Gastrocnemius medialis (tissue), 4 donors: ENCODE measurements at regions of chr5 and their contacts with region 1.

Region 1: GRCh38 chr5:172646716-172647285 is 5.7 kb downstream of the NEURL1B start:
- DNase-seq: no peak
- ATAC-seq: no peak
- H3K4me3 ChIP-seq: peak overlapping the region in 2 of 4 donors; percentile 13 to 19
- H3K27ac ChIP-seq: peak overlapping the region; percentile 48 to 87 (median 76)
- H3K4me1 ChIP-seq: peaks cover 13 to 17% of the 10 kb centered on the region in 2 donors
- H3K27me3 ChIP-seq: peaks cover 0 to under 1% (median 0%) of the 10 kb centered on the region in 3 donors
- CTCF ChIP-seq: no peak
- POLR2A ChIP-seq: no peak

Region 2: GRCh38 chr5:172690258-172691075 is 43.7 kb after region 1 on chr5:
- in situ Hi-C with region 1: loop called in 1 of 4 experiments (anchors 5 kb)
- intact Hi-C with region 1: no loop called
- DNase-seq: no peak
- ATAC-seq: no peak
- H3K4me3 ChIP-seq: no peak overlapping the region
- H3K27ac ChIP-seq: peak overlapping the region; percentile 59 to 77 (median 73)
- H3K4me1 ChIP-seq: peaks cover 0 to 16% of the 10 kb centered on the region in 2 donors
- H3K27me3 ChIP-seq: no peaks in the 10 kb centered on the region
- CTCF ChIP-seq: no peak
- POLR2A ChIP-seq: no peak

Region 3: GRCh38 chr5:172721301-172722130 is 74.7 kb after region 1 on chr5:
- in situ Hi-C with region 1: no loop called
- intact Hi-C with region 1: no loop called
- DNase-seq: no peak
- ATAC-seq: peak; percentile 33 to 56
- H3K4me3 ChIP-seq: no peak overlapping the region
- H3K27ac ChIP-seq: peak overlapping the region in 3 of 4 donors; percentile 29 to 60 (median 59)
- H3K4me1 ChIP-seq: peaks cover 10 to 12% of the 10 kb centered on the region in 2 donors
- H3K27me3 ChIP-seq: no peaks in the 10 kb centered on the region
- CTCF ChIP-seq: no peak
- POLR2A ChIP-seq: no peak